Mammary epithelial cell (primary cell): ENCODE measurements at regions of chr1 and their contacts with region 1.

Region 1: DNA sequence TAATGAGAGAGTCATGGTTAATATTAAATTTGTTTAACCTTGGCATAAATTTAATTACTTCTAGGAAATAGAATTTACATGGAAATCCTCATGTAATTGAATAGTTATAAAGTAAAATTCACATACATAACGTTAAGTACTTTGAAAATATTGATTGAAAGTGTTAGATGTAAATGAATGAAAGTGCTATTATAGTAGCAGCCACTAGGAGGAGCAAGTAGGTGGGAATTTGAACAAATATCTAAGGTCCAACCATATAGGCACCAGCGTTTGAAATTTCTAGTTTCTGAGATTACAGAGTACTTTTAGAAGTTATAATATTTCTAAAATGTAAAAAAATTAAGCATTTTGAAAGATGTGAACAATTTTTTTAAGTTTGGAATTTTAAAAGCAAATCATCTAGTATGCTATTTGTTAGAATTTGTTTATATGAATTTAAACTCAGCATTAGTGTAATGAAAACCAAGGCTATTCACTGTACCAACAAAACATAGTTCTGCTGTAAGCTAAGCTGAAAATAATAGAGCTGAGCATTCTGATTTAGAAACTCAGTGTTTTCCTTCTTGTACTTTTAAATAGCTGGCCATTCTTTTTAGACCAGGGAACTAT is 3.3 kb downstream of the B3GALT2 start:
- DNase-seq: peak; percentile 29
- H3K4me3 ChIP-seq: no peak overlapping the region
- H3K27ac ChIP-seq: no peak overlapping the region
- H3K4me1 ChIP-seq: peaks cover 13% of the 10 kb centered on the region
- H3K27me3 ChIP-seq: no peaks in the 10 kb centered on the region
- CTCF ChIP-seq: peak; percentile 77 to 90

Region 2: DNA sequence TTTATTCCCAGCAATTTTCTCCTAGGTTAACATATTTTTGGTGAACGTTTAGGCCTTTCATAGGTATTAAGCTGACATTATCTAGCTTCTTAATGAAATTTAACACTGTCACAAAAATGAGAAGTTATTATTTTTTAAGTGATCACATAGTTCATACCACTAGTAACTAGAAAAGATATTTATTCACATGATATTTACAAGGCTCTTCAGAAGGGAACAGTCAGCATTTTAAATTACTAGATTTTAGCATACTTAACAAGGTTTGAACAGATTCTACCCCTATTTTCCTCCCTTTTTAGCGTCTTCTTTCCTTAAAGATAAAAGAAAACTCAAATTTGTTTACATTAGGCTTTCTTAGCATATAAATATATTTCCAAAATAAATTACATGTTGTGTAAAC is 68.8 kb after region 1 on chr1:
- CTCF ChIA-PET with region 1: no interaction called
- dilution Hi-C with region 1: no loop called
- in situ Hi-C with region 1: no loop called
- intact Hi-C with region 1: loop called (anchors 5 kb)
- DNase-seq: no peak
- H3K4me3 ChIP-seq: no peak overlapping the region
- H3K27ac ChIP-seq: no peak overlapping the region
- H3K4me1 ChIP-seq: no peaks in the 10 kb centered on the region
- H3K27me3 ChIP-seq: no peaks in the 10 kb centered on the region
- CTCF ChIP-seq: no peak

Region 3: GRCh38 chr1:193338194-193338593 is 155.1 kb after region 1 on chr1:
- CTCF ChIA-PET with region 1: interaction called, 3 read pairs
- dilution Hi-C with region 1: no loop called
- in situ Hi-C with region 1: loop called (anchors 25 kb)
- intact Hi-C with region 1: loop called (anchors 1 kb)
- DNase-seq: peak; percentile 46
- H3K4me3 ChIP-seq: no peak overlapping the region
- H3K27ac ChIP-seq: no peak overlapping the region
- H3K4me1 ChIP-seq: no peaks in the 10 kb centered on the region
- H3K27me3 ChIP-seq: no peaks in the 10 kb centered on the region
- CTCF ChIP-seq: peak; percentile 16 to 38

Region 4: GRCh38 chr1:193406901-193407300 is 223.8 kb after region 1 on chr1:
- CTCF ChIA-PET with region 1: no interaction called
- dilution Hi-C with region 1: no loop called
- in situ Hi-C with region 1: no loop called
- intact Hi-C with region 1: loop called (anchors 10 kb)
- DNase-seq: peak; percentile 30
- H3K4me3 ChIP-seq: no peak overlapping the region
- H3K27ac ChIP-seq: no peak overlapping the region
- H3K4me1 ChIP-seq: no peaks in the 10 kb centered on the region
- H3K27me3 ChIP-seq: peaks cover 2% of the 10 kb centered on the region
- CTCF ChIP-seq: peak; percentile 70 to 74